ENCODE measurements at regions of chr1 and their contacts with region 1.

Region 1: DNA sequence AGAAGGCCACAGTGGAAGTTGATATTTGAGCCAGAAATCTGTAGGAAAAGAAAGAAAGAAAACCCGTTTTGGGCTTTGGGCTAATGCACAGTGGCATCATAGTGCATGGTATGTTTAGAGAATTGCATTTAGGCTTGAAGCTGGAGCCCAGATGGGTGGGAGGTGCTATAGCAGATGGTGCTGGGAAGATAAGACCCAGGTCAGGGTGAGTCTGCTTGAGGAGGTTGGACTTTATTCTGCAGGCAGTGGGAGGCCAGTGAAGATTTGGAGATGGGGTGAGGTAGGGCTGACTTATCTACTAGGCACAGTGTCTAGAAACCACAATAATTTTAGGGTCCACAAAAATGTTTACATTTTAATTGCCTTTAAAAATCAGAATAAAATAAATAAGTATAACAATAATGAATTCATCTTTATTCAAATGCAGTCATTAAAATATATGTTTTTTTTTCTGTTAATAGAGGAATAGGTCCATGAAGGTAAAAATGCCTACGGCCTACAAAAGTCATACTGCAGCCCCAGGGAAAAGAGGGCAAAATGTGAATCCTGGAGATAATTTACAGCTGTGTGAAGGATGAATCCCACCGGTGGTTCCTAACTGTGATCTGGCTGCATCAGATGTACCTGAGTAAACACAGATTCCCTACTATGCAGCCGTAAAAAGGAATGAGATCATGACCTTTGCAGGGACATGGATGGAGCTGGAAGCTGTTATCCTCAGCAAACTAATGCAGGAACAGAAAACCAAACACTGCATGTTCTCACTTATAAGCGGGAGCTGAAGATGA is 8.7 kb downstream of the DNAJC6 start:
- DNase-seq: no peak
- H3K4me3 ChIP-seq: no peak overlapping the region
- H3K27ac ChIP-seq: no peak overlapping the region
- H3K4me1 ChIP-seq: no peaks in the 10 kb centered on the region
- CTCF ChIP-seq: no peak

Region 2: DNA sequence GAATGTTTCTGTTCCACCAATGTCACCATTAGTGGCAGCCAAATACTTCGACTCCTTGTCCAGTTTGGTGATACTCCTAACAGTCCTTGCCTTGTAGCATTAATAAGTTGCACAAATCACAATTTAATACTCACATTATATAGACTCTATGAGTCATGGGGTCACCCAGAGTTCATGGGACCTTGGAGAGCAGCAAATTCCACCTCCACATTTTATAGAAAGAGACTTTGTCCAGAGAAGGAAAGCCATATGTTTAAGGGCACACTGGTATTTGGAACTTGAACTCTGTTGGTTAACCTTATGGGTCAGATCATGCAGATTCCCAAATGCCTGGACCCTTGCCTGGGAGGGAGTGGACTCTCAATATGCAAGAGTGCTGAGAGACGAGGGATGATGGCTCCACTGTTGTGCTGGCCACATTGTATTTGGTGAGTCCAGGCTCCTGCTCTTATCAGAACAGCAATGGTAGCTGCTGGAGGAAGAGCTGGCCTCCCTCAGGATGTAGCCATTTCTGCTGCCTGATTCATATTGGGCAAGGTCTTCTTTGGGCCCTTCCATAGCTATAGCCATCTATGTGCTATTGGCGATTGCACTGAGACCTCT is 21.9 kb after region 1 on chr1:
- CTCF ChIA-PET with region 1: no interaction called
- POLR2A ChIA-PET with region 1: interaction called, 3 read pairs
- intact Hi-C with region 1: loop called (anchors 2 kb)
- DNase-seq: no peak
- H3K4me3 ChIP-seq: no peak overlapping the region
- H3K27ac ChIP-seq: no peak overlapping the region
- H3K4me1 ChIP-seq: no peaks in the 10 kb centered on the region
- CTCF ChIP-seq: no peak

Region 3: DNA sequence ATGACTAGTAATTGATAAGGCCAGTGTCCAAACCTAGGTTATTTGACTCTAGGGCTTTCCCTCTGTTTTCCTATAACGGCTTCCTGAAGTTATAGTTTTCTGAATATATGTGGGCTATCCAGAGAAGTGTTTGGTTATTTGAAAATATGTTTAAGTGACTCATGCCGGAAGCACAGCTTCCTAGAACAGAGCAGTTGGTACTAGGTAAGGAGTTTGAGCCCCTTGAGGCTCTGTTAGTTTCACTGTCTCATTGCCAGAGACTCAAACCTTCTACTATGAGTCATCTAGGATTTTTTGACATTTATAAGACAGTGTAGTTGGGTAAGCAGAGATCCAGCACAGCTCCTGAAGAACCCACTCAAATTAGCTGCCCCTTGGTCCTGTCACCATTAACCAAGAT is 75.3 kb after region 1 on chr1:
- CTCF ChIA-PET with region 1: no interaction called
- POLR2A ChIA-PET with region 1: no interaction called
- intact Hi-C with region 1: no loop called
- DNase-seq: no peak
- H3K4me3 ChIP-seq: no peak overlapping the region
- H3K27ac ChIP-seq: no peak overlapping the region
- H3K4me1 ChIP-seq: no peaks in the 10 kb centered on the region
- CTCF ChIP-seq: no peak